Dorsolateral prefrontal cortex (tissue), 120 donors: ENCODE measurements at regions of chr2 and their contacts with region 1.

Region 1: GRCh38 chr2:27409321-27410073 is at the start of gene PPM1G:
- DNase-seq: peak; percentile 91 to 98 (median 94)
- H3K4me3 ChIP-seq: peak within 1 kb of the TSS; percentile 70 to 100 (median 96)
- H3K27ac ChIP-seq: peak within 1 kb of the TSS; percentile 40 to 93 (median 82)
- H3K27me3 ChIP-seq: no peaks in the 10 kb centered on the region
- CTCF ChIP-seq: peak in 38 of 56 donors; percentile 1 to 62 (median 28)
- total RNA-seq, gene PPM1G: 25.7 to 47.4 (median 35.7) TPM

Region 2: DNA sequence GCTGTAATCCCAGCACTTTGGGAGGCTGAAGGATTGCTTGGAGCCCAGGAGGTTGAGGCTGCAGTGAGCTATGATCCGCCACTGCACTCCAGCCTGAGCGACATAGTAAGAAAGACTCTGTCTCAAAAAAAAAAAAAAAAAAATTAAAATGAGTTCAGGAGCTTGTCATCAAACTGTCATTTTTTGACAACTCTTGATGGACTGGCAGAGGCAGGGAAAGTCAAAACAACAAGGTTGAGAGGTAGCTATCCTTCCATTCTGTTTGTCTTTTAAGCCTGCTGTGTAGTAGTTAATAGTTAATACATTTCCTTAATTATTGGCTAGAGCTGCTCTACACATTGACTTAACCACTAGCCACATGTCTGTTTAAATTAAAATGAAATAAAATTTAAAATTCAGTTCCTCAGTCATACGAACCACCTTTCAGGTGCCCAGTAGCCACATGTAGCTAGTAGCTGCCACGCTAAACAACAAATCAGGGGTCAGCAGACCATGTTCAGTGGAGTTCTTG is 538.9 kb before region 1 on chr2:
- intact Hi-C with region 1: no loop called
- DNase-seq: peak in 1 of 10 donors; percentile 6
- H3K4me3 ChIP-seq: no peak overlapping the region
- H3K27ac ChIP-seq: peak overlapping the region in 3 of 59 donors; percentile 1 to 50 (median 9)
- H3K27me3 ChIP-seq: no peaks in the 10 kb centered on the region
- CTCF ChIP-seq: no peak

Region 3: DNA sequence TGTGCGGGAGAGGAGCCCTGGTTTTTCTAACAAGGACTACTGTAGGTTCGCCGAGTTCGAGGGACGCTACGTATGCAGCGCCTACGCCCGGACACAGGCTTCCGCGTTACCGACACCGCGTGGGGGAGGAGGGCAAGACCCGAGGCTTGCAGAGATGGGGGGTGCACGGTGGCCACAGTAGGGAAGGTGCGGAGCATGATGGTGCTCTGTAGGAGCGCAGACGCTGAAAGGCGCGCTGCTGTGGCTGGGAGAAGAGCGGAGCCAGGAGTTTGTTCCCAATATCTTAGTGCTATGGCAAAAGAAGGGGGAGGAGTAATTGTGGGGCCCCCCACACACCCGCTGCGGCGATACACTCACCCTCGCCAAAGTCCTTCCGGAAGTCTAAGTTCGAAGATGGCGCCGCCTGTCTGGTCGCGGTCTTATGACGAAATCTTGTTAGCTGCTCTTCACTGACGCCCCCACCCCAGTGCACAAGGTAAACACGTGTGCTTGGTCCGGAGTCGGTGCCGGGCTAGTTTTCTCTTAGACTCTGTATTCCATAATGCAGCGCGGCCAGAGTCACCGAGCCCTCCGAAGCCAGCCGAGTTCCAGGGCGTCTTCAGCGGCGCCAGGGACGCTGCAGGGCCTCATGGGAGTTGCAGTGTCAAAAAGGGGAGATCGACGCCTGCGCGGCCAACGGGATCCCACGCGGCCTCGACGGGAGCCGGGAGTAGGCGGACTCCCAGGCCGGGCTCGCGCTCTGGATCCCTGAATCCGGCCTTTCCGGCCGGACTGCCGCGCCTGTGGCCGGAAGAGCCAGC is 52.9 kb before region 1 on chr2 and contains the start of gene GTF3C2:
- intact Hi-C with region 1: loop called in 1 of 2 experiments (anchors 2 kb)
- DNase-seq: peak; percentile 93 to 98 (median 95)
- H3K4me3 ChIP-seq: peak within 1 kb of the TSS; percentile 64 to 100 (median 95)
- H3K27ac ChIP-seq: peak within 1 kb of the TSS; percentile 46 to 97 (median 90)
- H3K27me3 ChIP-seq: no peaks in the 10 kb centered on the region
- CTCF ChIP-seq: peak in 40 of 56 donors; percentile 5 to 61 (median 30)
- total RNA-seq, gene GTF3C2: 37.3 to 76.0 (median 50.6) TPM

Region 4: DNA sequence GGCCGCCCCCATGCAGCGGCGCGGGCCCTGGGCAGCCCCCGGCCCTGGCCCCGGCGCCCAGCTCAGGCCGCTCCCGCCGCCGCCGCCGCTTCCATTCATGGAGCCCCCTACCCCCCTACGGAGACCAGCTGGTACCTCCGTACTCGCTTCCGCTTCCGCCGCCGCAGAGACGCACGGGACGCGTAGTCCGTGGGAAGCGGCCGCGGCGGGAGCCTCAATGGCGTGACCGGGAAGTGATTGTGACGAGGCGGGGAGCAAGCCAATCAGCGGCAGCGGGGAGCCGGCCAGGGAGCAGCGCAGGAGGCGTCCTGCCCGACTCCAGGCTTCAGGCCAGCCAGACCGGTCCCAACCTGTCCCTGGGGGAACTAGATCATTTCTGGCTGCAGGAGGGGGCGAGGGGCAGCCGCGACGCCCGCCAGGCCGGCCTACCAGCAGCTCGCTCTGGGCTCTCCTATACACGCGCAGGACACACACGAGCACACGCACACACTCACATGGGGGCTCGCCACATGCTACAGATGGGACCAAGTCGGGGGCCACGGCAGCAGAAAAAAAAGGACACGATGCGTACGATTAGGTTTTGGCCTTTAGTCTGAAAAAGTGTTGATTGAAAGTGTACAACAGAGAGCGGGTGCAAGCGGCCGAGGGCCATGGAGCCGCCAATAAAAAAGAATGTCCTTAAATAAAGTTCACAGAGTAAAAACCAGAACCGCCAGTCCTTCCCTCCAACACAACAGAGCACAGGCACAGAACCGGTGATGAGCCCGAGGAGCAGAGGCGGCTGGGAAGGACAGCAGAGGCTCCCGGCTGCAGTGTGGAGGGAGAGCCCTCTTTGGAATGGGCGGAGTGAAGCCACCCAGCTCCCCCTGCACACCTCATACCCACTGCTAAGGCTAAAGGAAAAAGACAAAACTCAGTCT is 28.6 kb before region 1 on chr2 and contains the start of gene ZNF513:
- intact Hi-C with region 1: loop called (anchors 2 kb)
- DNase-seq: peak; percentile 96 to 99 (median 98)
- H3K4me3 ChIP-seq: peak within 1 kb of the TSS; percentile 51 to 99 (median 74)
- H3K27ac ChIP-seq: peak within 1 kb of the TSS in 58 of 59 donors; percentile 58 to 97 (median 91)
- H3K27me3 ChIP-seq: no peaks in the 10 kb centered on the region
- CTCF ChIP-seq: peak in 15 of 56 donors; percentile 6 to 51 (median 13)
- total RNA-seq, gene ZNF513: 13.9 to 41.1 (median 20.6) TPM

Region 5: DNA sequence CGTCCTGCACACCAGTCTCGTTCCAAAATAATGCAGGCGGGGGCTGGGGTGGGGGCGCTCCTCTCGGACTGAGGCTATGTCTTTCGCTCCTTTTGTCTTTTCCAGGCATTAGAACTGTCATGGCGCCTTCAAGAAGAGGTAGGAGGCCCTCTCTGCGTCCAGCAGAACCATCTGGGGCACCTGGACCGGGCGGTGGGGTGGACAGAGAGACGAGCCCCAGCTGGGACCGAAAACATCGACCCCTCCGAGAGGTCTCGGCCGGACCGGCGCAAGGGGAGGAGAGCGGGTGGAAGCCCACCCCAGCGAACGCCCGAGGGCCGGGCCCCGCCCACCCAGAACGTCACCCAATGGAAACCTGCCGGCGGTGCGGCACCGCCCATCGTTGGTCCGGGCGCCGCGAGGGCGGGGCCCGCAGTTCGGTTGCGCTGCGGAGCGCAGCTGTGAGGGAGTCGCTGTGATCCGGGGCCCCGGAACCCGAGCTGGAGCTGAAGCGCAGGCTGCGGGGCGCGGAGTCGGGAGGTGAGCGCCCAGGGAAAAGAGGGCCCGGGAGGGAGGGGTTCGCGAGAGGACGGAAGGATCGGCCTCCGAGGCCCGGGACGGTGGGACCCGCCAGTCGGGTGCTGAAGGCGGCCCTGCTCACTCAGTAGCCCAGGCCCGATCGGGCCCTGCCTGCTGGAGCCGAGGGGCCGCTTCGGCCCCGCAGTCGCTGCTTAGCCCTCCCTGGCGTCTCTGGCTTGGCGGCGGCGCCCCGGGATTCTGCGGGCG is 18.9 kb after region 1 on chr2 and contains the start of gene NRBP1:
- intact Hi-C with region 1: loop called (anchors 1 kb)
- DNase-seq: peak; percentile 83 to 97 (median 93)
- H3K4me3 ChIP-seq: peak within 1 kb of the TSS; percentile 67 to 100 (median 94)
- H3K27ac ChIP-seq: peak within 1 kb of the TSS; percentile 81 to 99 (median 96)
- H3K27me3 ChIP-seq: no peaks in the 10 kb centered on the region
- CTCF ChIP-seq: peak in 33 of 56 donors; percentile 2 to 48 (median 27)
- total RNA-seq, gene NRBP1: 61.5 to 97.0 (median 80.4) TPM

Region 6: GRCh38 chr2:27638037-27638637 is 228.6 kb after region 1 on chr2:
- intact Hi-C with region 1: loop called in 1 of 2 experiments (anchors 10 kb)
- DNase-seq: no peak
- H3K4me3 ChIP-seq: no peak overlapping the region
- H3K27ac ChIP-seq: no peak overlapping the region
- H3K27me3 ChIP-seq: no peaks in the 10 kb centered on the region
- CTCF ChIP-seq: no peak